Caco-2 (cell line): ENCODE measurements at regions of chr2 and their contacts with region 1.

Region 1: GRCh38 chr2:78568795-78569430 is 456.6 kb upstream of the REG3G start:
- DNase-seq: no peak
- H3K4me3 ChIP-seq: no peak overlapping the region
- H3K4me3 Mint-ChIP-seq: no peak overlapping the region
- H3K27ac Mint-ChIP-seq: no peak overlapping the region
- H3K4me1 ChIP-seq: no peaks in the 10 kb centered on the region
- H3K4me1 Mint-ChIP-seq: no peaks in the 10 kb centered on the region
- H3K27me3 ChIP-seq: no peaks in the 10 kb centered on the region
- H3K27me3 Mint-ChIP-seq: peaks cover 13% of the 10 kb centered on the region
- CTCF ChIP-seq: no peak

Region 2: GRCh38 chr2:78606895-78607294 is 38.0 kb after region 1 on chr2:
- CTCF ChIA-PET with region 1: no interaction called
- POLR2A ChIA-PET with region 1: no interaction called
- intact Hi-C with region 1: loop called (anchors 1 kb)
- DNase-seq: no peak
- H3K4me3 ChIP-seq: no peak overlapping the region
- H3K4me3 Mint-ChIP-seq: no peak overlapping the region
- H3K27ac Mint-ChIP-seq: no peak overlapping the region
- H3K4me1 ChIP-seq: no peaks in the 10 kb centered on the region
- H3K4me1 Mint-ChIP-seq: no peaks in the 10 kb centered on the region
- H3K27me3 ChIP-seq: no peaks in the 10 kb centered on the region
- H3K27me3 Mint-ChIP-seq: peaks cover 5% of the 10 kb centered on the region
- CTCF ChIP-seq: no peak